ENCODE measurements at regions of chr3 and their contacts with region 1.

Region 1: GRCh38 chr3:53072653-53073552 is 27.0 kb upstream of the SFMBT1 start:
- DNase-seq: peak; percentile 86 to 94
- H3K4me3 ChIP-seq: peak overlapping the region; percentile 72 to 93 (median 74)
- H3K27ac ChIP-seq: peak overlapping the region; percentile 38 to 83 (median 75)
- H3K4me1 ChIP-seq: peaks cover 6 to 22% (median 20%) of the 10 kb centered on the region in 4 donors
- H3K27me3 ChIP-seq: no peaks in the 10 kb centered on the region
- CTCF ChIP-seq: peak in 6 of 7 experiments; percentile 16 to 95 (median 90)
- EP300 ChIP-seq: no peak
- POLR2A ChIP-seq: no peak

Region 2: DNA sequence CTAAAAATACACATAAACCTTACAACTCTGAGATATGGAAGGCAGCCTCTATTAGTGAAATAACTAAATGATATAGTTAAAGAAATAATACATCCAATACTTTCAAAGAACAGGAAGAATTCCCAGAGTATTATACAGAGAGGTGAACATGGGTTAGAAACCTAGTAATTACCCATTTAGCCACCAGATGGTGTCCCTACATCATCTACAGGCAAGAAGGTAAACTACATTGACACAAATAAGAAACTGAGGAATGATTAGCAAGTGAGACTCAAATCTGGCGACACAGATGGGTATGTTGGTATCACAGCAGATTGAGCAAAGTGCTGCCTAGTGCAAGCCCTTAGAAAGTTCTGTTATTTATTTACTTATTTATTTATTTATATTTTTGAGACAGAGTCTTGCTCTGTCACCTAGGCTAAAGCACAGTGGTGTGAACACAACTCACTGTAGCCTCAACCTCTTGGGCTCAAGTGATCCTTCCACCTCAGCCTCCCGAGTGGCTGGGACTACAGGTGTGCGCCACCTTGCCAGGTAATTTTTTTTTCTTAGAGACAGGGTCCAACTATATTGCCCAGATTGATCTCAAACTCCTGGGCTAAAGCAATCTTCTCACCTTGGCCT is 330.4 kb before region 1 on chr3:
- intact Hi-C with region 1: loop called (anchors 10 kb)
- DNase-seq: peak in 1 of 2 donors; percentile 60
- H3K4me3 ChIP-seq: no peak overlapping the region
- H3K27ac ChIP-seq: peak overlapping the region in 4 of 5 donors; percentile 19 to 43 (median 29)
- H3K4me1 ChIP-seq: no peaks in the 10 kb centered on the region
- H3K27me3 ChIP-seq: no peaks in the 10 kb centered on the region
- CTCF ChIP-seq: peak in 3 of 7 experiments; percentile 6 to 60 (median 54)
- EP300 ChIP-seq: no peak
- POLR2A ChIP-seq: no peak

Region 3: GRCh38 chr3:52851348-52851747 is 221.6 kb before region 1 on chr3:
- intact Hi-C with region 1: loop called (anchors 10 kb)
- DNase-seq: peak in 1 of 2 donors; percentile 76
- H3K4me3 ChIP-seq: no peak overlapping the region
- H3K27ac ChIP-seq: no peak overlapping the region
- H3K4me1 ChIP-seq: peaks cover 0 to 7% (median 3%) of the 10 kb centered on the region in 4 donors
- H3K27me3 ChIP-seq: no peaks in the 10 kb centered on the region
- CTCF ChIP-seq: peak in 5 of 7 experiments; percentile 32 to 70 (median 58)
- EP300 ChIP-seq: no peak
- POLR2A ChIP-seq: no peak

Measured in stomach (tissue), 19 donors.